ENCODE measurements at regions of chr12 and their contacts with region 1.

Region 1: DNA sequence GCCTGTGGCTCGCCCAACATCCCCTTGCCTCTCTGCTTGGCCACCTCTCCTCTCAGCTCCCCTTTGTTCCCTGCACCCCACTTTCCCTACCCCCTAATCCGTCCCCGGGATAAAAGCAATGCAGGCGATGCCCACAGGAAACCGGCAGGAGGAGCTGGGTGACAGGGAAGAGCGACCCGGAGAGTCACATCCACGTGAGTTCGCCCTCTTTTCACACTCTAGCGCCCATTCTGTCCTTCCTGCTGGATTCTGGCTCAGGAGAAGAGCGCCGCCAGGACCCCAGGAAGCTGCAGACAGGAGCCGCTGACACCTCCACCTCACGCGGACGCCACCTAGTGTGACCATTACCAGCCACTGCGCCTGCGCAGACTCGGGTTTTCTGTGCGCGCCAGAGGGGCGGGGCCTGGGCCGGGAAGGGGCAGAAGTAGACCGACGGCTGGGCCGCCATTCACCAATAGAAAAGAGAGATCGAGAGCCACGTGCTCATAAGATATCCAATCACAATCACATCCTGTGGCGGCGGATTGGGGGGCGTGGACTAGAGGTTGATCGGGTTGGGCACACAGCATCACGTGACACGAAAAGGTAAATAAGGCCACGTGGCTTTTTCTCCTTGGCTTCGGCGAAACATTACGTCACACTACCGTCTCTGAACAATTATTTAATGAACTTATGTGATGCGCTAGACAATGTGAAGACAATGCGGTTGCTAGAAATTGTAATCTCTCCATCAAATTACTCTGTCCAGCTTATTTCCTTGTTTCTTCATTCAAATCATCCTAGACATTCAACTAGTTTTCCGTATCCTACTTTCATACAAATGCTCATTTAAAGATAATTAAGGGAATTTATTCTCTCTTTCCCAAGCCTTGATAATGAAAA is 10.1 kb downstream of the PLA2G1B start:
- DNase-seq: peak; percentile 99
- ATAC-seq: peak; percentile 89
- H3K4me3 ChIP-seq: peak overlapping the region; percentile 70 to 82 (median 70)
- H3K27ac ChIP-seq: peak overlapping the region; percentile 90
- H3K4me1 ChIP-seq: peaks cover 34% of the 10 kb centered on the region
- H3K27me3 ChIP-seq: no peaks in the 10 kb centered on the region; a peak in 1 of 5 replicates
- CTCF ChIP-seq: peak; percentile 81
- EP300 ChIP-seq: peak in 1 of 2 experiments; percentile 23; a peak in 1 of 4 replicates
- POLR2A ChIP-seq: peak; percentile 84 to 90
- RAD21 ChIP-seq: 0 out of 2 replicates have a peak, but pooled peaks have one; percentile 30

Region 2: DNA sequence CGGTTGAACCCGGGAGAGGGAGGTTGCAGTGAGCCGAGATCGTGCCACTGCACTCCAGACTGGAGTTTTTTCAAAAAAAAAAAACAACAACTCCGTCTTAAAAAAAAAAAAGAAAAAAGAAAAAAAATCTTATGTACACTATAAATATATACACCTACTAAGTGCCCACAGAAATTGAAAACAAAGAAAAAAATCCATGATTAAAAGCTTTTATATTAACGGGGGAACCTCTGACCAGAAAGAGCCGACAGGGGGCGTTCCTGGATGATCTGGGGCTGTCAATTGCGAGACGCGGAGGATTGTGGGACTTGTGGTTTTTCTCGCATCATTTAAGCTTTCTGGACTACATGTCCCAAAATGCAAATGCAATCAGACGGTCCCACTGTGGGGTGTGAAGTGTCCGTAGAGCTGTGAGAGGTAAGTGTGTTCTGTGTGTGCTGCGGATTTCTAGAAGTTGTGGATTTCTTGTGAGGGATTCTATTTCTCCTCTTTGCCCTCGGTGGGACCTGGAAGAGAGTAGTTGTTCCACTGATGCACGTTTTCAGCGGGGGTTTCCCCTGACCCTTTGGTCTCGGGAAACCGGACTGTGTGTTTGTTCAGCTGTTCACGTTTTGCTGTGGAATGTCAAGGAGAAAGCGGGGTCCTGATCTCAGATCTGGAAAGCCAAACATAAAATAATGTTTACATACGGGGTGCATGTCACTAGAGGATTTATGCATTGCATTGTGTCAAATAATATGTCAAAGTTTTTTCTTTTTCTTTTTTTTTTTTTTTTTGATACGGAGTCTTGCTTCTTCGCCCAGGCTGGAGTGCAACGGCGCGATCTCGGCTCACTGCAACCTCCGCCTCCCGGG is 15.3 kb before region 1 on chr12 and contains the start of gene SIRT4:
- CTCF ChIA-PET with region 1: interaction called, 5 read pairs
- POLR2A ChIA-PET with region 1: interaction called, 35 read pairs
- in situ Hi-C with region 1: no loop called
- intact Hi-C with region 1: no loop called
- DNase-seq: peak; percentile 93
- ATAC-seq: peak; percentile 96
- H3K4me3 ChIP-seq: peak within 1 kb of the TSS; percentile 66 to 79 (median 71)
- H3K27ac ChIP-seq: peak within 1 kb of the TSS; percentile 70
- H3K4me1 ChIP-seq: peaks cover 10% of the 10 kb centered on the region
- H3K27me3 ChIP-seq: no peaks in the 10 kb centered on the region
- CTCF ChIP-seq: peak; percentile 82
- EP300 ChIP-seq: 0 out of 4 replicates have a peak, but pooled peaks of 1 of the 2 experiments have one; percentile 12
- POLR2A ChIP-seq: peak; percentile 45 to 53
- RAD21 ChIP-seq: 0 out of 2 replicates have a peak, but pooled peaks have one; percentile 15
- total RNA-seq, gene SIRT4: 3.4 and 7.0 TPM in 2 replicates

Measured in HepG2 (cell line).